Breast epithelium (tissue), 4 donors: ENCODE measurements at regions of chr7 and their contacts with region 1.

Region 1: DNA sequence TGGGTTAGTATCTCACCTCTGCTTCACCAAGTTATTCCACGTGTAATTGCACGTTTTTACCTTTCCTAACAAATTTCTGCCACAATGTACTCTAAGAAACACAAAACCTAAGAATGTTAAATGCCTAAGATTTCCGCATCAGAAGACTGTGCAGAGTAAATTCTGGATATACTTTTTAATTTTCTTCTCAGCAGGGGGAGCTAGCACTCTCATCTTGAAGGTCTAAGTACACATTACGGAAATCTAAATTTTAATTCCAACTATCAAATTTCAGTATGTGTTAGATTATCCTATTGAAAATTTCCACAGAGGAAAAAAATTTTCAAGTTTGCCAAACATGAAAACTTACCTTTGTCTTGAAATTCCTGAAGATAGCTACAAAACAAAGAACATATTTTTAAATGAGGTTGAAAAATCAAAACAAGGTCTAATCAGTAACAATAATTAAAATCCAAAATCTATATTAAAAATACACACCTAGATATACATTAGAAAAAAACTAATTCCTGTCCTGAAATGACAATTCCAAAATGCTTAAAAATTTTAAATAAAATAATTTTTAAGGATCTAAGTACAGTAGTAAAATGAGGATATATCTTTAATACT is 10.5 kb downstream of the SKAP2 start:
- DNase-seq: no peak
- H3K4me3 ChIP-seq: no peak overlapping the region
- H3K27ac ChIP-seq: peak overlapping the region in 1 of 2 donors; percentile 86
- H3K4me1 ChIP-seq: no peaks in the 10 kb centered on the region
- H3K27me3 ChIP-seq: no peaks in the 10 kb centered on the region
- CTCF ChIP-seq: peak in 2 of 3 donors; percentile 58 to 67
- POLR2A ChIP-seq: no peak

Region 2: GRCh38 chr7:26043801-26044200 is 810.1 kb before region 1 on chr7:
- intact Hi-C with region 1: loop called (anchors 5 kb)
- DNase-seq: no peak
- H3K4me3 ChIP-seq: no peak overlapping the region
- H3K27ac ChIP-seq: no peak overlapping the region
- H3K4me1 ChIP-seq: no peaks in the 10 kb centered on the region
- H3K27me3 ChIP-seq: no peaks in the 10 kb centered on the region
- CTCF ChIP-seq: no peak
- POLR2A ChIP-seq: no peak

Region 3: GRCh38 chr7:27143023-27143949 is 289.4 kb after region 1 on chr7 and contains the start of gene HOXA5:
- intact Hi-C with region 1: loop called (anchors 5 kb)
- DNase-seq: peak in 1 of 2 donors; percentile 94
- H3K4me3 ChIP-seq: peak within 1 kb of the TSS; percentile 57 to 80 (median 75)
- H3K27ac ChIP-seq: peak within 1 kb of the TSS; percentile 95 to 96
- H3K4me1 ChIP-seq: peaks cover 0 to 4% of the 10 kb centered on the region in 2 donors
- H3K27me3 ChIP-seq: peaks cover 0 to 21% of the 10 kb centered on the region in 2 donors
- CTCF ChIP-seq: peak; percentile 87 to 92 (median 89)
- POLR2A ChIP-seq: peak; percentile 66
- total RNA-seq, gene HOXA5: 11.5 to 48.7 (median 22.6) TPM